Naive thymus-derived CD4-positive, alpha-beta T cell (primary cell): ENCODE measurements at regions of chr5 and their contacts with region 1.

Region 1: GRCh38 chr5:91928754-91929521 is 545.8 kb upstream of the ARRDC3 start:
- DNase-seq: peak in 1 of 9 donors; percentile 2
- ATAC-seq: no peak
- H3K4me3 ChIP-seq: no peak overlapping the region
- H3K4me3 Mint-ChIP-seq: no peak overlapping the region
- H3K27ac ChIP-seq: no peak overlapping the region
- H3K27ac Mint-ChIP-seq: no peak overlapping the region
- H3K4me1 ChIP-seq: no peaks in the 10 kb centered on the region
- H3K4me1 Mint-ChIP-seq: no peaks in the 10 kb centered on the region
- H3K27me3 ChIP-seq: no peaks in the 10 kb centered on the region
- H3K27me3 Mint-ChIP-seq: peaks cover 0 to 6% (median 0%) of the 10 kb centered on the region in 5 donors

Region 2: DNA sequence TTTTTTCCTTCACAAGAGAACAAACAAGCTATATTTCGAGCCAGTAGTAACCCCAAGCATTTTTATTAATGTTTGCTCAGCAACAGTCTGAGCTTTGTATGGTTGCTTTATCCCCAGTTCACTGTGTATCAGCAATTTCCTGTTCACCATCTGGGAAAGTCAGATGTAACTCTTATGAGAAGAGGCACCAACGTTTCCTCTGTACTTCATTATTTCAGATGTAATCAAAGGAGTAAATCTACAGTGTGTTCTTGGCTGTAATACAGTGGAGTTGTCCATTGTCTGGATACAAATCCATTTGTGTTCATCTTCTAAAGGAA is 886.0 kb before region 1 on chr5:
- CTCF ChIA-PET with region 1: no interaction called
- POLR2A ChIA-PET with region 1: no interaction called
- intact Hi-C with region 1: loop called in 1 of 2 experiments (anchors 5 kb)
- DNase-seq: no peak
- ATAC-seq: no peak
- H3K4me3 ChIP-seq: no peak overlapping the region
- H3K4me3 Mint-ChIP-seq: no peak overlapping the region
- H3K27ac ChIP-seq: no peak overlapping the region
- H3K27ac Mint-ChIP-seq: no peak overlapping the region
- H3K4me1 ChIP-seq: no peaks in the 10 kb centered on the region
- H3K4me1 Mint-ChIP-seq: no peaks in the 10 kb centered on the region
- H3K27me3 ChIP-seq: no peaks in the 10 kb centered on the region
- H3K27me3 Mint-ChIP-seq: peaks cover 3 to 16% (median 10%) of the 10 kb centered on the region in 5 donors

Region 3: DNA sequence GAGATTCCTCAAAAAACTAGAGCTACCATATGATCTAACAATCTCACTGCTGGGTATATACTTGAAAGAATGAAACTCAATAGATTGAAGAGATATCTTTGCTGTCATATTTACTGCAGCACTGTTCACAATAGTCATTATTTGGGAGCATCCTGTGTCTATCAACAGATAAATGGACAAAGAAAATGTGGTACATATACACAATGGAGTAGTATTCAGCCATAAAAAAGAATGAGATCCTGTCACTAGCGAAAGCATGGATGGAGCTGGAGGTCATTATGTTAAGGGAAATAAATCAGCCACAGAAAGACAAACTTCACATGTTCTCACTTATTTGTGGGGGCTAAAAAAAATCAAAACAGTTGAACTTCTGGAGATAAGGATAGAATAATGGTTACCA is 40.1 kb before region 1 on chr5:
- CTCF ChIA-PET with region 1: no interaction called
- POLR2A ChIA-PET with region 1: no interaction called
- intact Hi-C with region 1: no loop called
- DNase-seq: no peak
- ATAC-seq: no peak
- H3K4me3 ChIP-seq: no peak overlapping the region
- H3K4me3 Mint-ChIP-seq: no peak overlapping the region
- H3K27ac ChIP-seq: no peak overlapping the region
- H3K27ac Mint-ChIP-seq: no peak overlapping the region
- H3K4me1 ChIP-seq: no peaks in the 10 kb centered on the region
- H3K4me1 Mint-ChIP-seq: no peaks in the 10 kb centered on the region
- H3K27me3 ChIP-seq: no peaks in the 10 kb centered on the region
- H3K27me3 Mint-ChIP-seq: no peaks in the 10 kb centered on the region

Region 4: DNA sequence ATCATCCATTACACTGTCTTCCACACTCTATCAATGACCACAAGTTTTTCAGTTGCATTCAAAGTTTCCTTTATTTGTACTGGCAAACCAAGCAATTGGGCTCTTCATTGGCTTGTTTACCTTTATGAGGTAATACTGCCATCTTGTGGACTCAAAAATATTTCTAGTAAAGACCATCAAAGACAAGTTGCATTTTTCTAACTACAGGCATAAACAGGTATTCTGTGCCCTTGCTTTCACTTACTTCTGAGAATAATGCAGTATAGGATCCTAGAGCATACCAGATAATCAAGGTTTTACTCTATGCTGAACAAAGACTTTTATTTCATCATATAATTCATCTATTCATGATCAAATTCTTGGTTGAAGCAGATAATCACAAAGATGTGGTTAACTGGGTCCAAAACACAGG is 1986.2 kb after region 1 on chr5:
- CTCF ChIA-PET with region 1: no interaction called
- POLR2A ChIA-PET with region 1: no interaction called
- intact Hi-C with region 1: loop called in 1 of 2 experiments (anchors 10 kb)
- DNase-seq: peak in 6 of 9 donors; percentile 4 to 46 (median 29)
- ATAC-seq: peak; percentile 54
- H3K4me3 ChIP-seq: no peak overlapping the region
- H3K4me3 Mint-ChIP-seq: no peak overlapping the region
- H3K27ac ChIP-seq: no peak overlapping the region
- H3K27ac Mint-ChIP-seq: no peak overlapping the region
- H3K4me1 ChIP-seq: no peaks in the 10 kb centered on the region
- H3K4me1 Mint-ChIP-seq: peaks cover 0 to 5% (median 0%) of the 10 kb centered on the region in 7 donors
- H3K27me3 ChIP-seq: no peaks in the 10 kb centered on the region
- H3K27me3 Mint-ChIP-seq: peaks cover 0 to 2% (median 0%) of the 10 kb centered on the region in 5 donors